Activated CD4-positive, alpha-beta T cell treated with anti-CD3 and anti-CD28 coated beads for 36 hours (primary cell): ENCODE measurements at regions of chr22 and their contacts with region 1.

Region 1: GRCh38 chr22:40525249-40525884 is 111.2 kb downstream of the MRTFA start:
- DNase-seq: peak; percentile 87
- ATAC-seq: peak; percentile 65
- H3K4me3 Mint-ChIP-seq: no peak overlapping the region
- H3K27ac Mint-ChIP-seq: peak overlapping the region; percentile 16
- H3K4me1 Mint-ChIP-seq: peaks cover 53% of the 10 kb centered on the region
- H3K27me3 Mint-ChIP-seq: no peaks in the 10 kb centered on the region

Region 2: GRCh38 chr22:40547729-40548172 is 22.4 kb after region 1 on chr22:
- CTCF ChIA-PET with region 1: interaction called, 6 read pairs
- POLR2A ChIA-PET with region 1: interaction called, 10 read pairs
- intact Hi-C with region 1: no loop called
- DNase-seq: no peak
- ATAC-seq: peak; percentile 55
- H3K4me3 Mint-ChIP-seq: no peak overlapping the region
- H3K27ac Mint-ChIP-seq: no peak overlapping the region
- H3K4me1 Mint-ChIP-seq: peaks cover 13% of the 10 kb centered on the region
- H3K27me3 Mint-ChIP-seq: no peaks in the 10 kb centered on the region